ENCODE measurements at regions of chr9 and their contacts with region 1.

Region 1: GRCh38 chr9:96232539-96233241 is 69.3 kb downstream of the HSD17B3 start:
- DNase-seq: peak in 5 of 9 donors; percentile 13 to 42 (median 28)
- ATAC-seq: peak; percentile 69
- H3K4me3 ChIP-seq: no peak overlapping the region
- H3K4me3 Mint-ChIP-seq: no peak overlapping the region
- H3K27ac ChIP-seq: no peak overlapping the region
- H3K27ac Mint-ChIP-seq: peak overlapping the region in 1 of 9 donors; percentile 16
- H3K4me1 ChIP-seq: no peaks in the 10 kb centered on the region
- H3K4me1 Mint-ChIP-seq: peaks cover 0 to 3% (median 0%) of the 10 kb centered on the region in 7 donors
- H3K27me3 ChIP-seq: no peaks in the 10 kb centered on the region
- H3K27me3 Mint-ChIP-seq: peaks cover 15 to 51% (median 26%) of the 10 kb centered on the region in 5 donors

Region 2: GRCh38 chr9:96177005-96177718 is 55.5 kb before region 1 on chr9:
- CTCF ChIA-PET with region 1: no interaction called
- POLR2A ChIA-PET with region 1: no interaction called
- intact Hi-C with region 1: no loop called
- DNase-seq: no peak
- ATAC-seq: no peak
- H3K4me3 ChIP-seq: no peak overlapping the region
- H3K4me3 Mint-ChIP-seq: no peak overlapping the region
- H3K27ac ChIP-seq: no peak overlapping the region
- H3K27ac Mint-ChIP-seq: no peak overlapping the region
- H3K4me1 ChIP-seq: no peaks in the 10 kb centered on the region
- H3K4me1 Mint-ChIP-seq: no peaks in the 10 kb centered on the region
- H3K27me3 ChIP-seq: no peaks in the 10 kb centered on the region
- H3K27me3 Mint-ChIP-seq: peaks cover 15 to 45% (median 21%) of the 10 kb centered on the region in 5 donors

Region 3: DNA sequence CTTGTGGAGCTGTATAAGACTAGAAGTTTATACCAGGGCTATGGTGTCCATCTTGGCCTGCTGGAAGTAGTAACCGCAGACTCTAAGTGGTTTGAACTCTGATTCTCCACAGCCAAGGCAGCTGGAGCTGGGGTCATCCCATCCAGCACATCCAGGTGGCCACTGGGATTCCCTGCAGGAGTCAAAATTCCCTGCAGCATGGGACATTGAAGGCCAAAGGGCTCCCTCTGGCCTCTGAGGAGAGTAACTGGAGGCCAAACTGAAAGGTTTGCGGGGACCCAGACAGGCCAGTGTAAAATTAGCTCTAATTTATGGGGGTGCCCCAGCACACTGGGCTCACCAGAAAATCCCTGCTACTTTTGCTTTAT is 434.7 kb after region 1 on chr9:
- CTCF ChIA-PET with region 1: no interaction called
- POLR2A ChIA-PET with region 1: no interaction called
- intact Hi-C with region 1: loop called (anchors 5 kb)
- DNase-seq: no peak
- ATAC-seq: no peak
- H3K4me3 ChIP-seq: no peak overlapping the region
- H3K4me3 Mint-ChIP-seq: no peak overlapping the region
- H3K27ac ChIP-seq: no peak overlapping the region
- H3K27ac Mint-ChIP-seq: no peak overlapping the region
- H3K4me1 ChIP-seq: no peaks in the 10 kb centered on the region
- H3K4me1 Mint-ChIP-seq: peaks cover 0 to 1% (median 0%) of the 10 kb centered on the region in 7 donors
- H3K27me3 ChIP-seq: no peaks in the 10 kb centered on the region
- H3K27me3 Mint-ChIP-seq: peaks cover 0 to 20% (median 10%) of the 10 kb centered on the region in 5 donors

Measured in naive thymus-derived CD4-positive, alpha-beta T cell (primary cell).